Transverse colon (tissue), 4 donors: ENCODE measurements at regions of chr3 and their contacts with region 1.

Region 1: DNA sequence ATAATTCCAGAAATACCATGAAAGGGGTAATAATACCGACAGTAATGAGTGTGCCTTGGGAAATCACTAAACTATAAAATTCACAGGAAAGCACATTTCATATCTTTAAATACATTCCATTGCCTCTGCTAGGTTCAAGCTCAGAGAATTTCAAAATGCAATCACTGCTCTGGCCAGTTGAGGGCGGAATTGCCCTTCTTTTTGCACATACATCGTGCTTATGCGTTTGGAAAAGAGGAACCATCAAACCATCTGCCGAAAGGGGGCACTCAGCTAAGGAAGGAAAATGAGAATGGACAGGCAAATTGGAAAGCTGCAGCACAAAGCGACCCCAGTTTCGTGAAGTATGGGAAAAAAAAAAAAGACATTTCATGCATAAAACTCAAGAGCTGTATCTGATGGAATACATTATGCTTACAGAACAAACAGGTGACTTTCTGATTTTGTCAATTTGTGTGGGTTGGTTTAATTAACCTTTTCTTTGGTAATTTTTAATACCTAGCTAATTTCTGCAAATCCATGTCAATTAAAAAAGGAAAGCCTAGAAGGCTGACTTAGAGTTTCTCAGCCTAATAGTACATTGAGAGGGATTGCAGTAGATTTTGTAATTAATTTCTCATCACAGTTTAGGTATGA is 61.4 kb downstream of the TUSC7 start:
- DNase-seq: peak; percentile 66
- H3K4me3 ChIP-seq: no peak overlapping the region
- H3K27ac ChIP-seq: no peak overlapping the region
- H3K4me1 ChIP-seq: no peaks in the 10 kb centered on the region
- H3K27me3 ChIP-seq: no peaks in the 10 kb centered on the region
- CTCF ChIP-seq: peak; percentile 73 to 86 (median 81)
- EP300 ChIP-seq: no peak
- POLR2A ChIP-seq: no peak

Region 2: DNA sequence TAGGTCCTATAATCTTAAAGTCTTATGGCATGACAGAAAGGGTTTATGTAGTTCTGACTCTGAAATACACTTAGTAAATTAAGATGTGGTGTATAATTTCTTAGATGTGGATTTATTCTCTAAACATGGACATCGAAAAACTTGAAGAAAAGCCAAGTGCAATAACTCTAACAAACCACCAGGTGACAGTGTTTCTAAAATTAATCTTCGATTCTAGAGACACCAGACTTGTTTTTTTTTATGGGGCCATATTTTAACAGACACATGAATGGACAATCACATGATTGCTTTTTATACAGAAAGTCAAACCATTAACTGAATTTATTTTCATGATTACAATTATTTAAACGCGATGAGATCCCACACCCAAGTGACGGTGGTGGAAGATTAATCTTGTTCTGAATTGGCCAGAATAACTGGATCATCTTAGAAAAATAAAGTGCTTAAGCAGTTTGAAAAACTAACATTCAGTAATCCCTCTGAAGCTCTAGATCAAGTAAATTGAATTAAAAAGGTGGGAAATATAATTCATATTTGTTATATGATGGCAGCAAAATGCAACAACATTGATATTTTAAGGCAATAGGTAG is 630.7 kb before region 1 on chr3:
- in situ Hi-C with region 1: loop called in 2 of 4 experiments (anchors 25 kb)
- intact Hi-C with region 1: no loop called
- DNase-seq: no peak
- H3K4me3 ChIP-seq: no peak overlapping the region
- H3K27ac ChIP-seq: peak overlapping the region in 1 of 4 donors; percentile 50
- H3K4me1 ChIP-seq: peaks cover 0 to 6% (median 1%) of the 10 kb centered on the region in 4 donors
- H3K27me3 ChIP-seq: no peaks in the 10 kb centered on the region
- CTCF ChIP-seq: peak; percentile 66 to 92 (median 85)
- EP300 ChIP-seq: no peak
- POLR2A ChIP-seq: no peak

Region 3: GRCh38 chr3:116971531-116971930 is 200.6 kb after region 1 on chr3:
- in situ Hi-C with region 1: no loop called
- intact Hi-C with region 1: no loop called
- DNase-seq: no peak
- H3K4me3 ChIP-seq: no peak overlapping the region
- H3K27ac ChIP-seq: no peak overlapping the region
- H3K4me1 ChIP-seq: no peaks in the 10 kb centered on the region
- H3K27me3 ChIP-seq: no peaks in the 10 kb centered on the region
- CTCF ChIP-seq: no peak
- EP300 ChIP-seq: no peak
- POLR2A ChIP-seq: no peak

Region 4: GRCh38 chr3:117526470-117527079 is 755.6 kb after region 1 on chr3:
- in situ Hi-C with region 1: loop called in 1 of 4 experiments (anchors 25 kb)
- intact Hi-C with region 1: no loop called
- DNase-seq: peak; percentile 30
- H3K4me3 ChIP-seq: no peak overlapping the region
- H3K27ac ChIP-seq: no peak overlapping the region
- H3K4me1 ChIP-seq: no peaks in the 10 kb centered on the region
- H3K27me3 ChIP-seq: no peaks in the 10 kb centered on the region
- CTCF ChIP-seq: peak; percentile 45 to 68 (median 59)
- EP300 ChIP-seq: no peak
- POLR2A ChIP-seq: no peak

Region 5: DNA sequence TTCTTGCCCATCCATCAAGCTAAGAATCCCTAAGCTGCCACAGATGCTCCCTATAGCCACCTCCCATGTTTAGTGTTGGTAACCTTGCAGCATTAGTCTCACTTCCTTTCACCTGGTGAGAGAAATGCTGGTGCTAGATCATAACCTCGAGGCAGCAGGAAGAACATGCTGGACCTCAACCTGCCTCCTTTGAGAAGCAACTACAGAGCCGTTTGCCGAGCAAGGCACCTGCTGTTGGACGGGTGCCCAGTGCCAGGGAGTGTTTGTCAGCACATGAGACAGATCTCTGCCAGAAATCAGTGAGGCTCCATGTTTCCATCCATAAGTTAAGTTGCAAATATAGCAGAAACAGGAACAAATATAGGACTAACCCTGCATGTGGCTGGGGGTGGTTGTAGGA is 894.4 kb after region 1 on chr3:
- in situ Hi-C with region 1: no loop called
- intact Hi-C with region 1: no loop called
- DNase-seq: peak; percentile 17
- H3K4me3 ChIP-seq: no peak overlapping the region
- H3K27ac ChIP-seq: no peak overlapping the region
- H3K4me1 ChIP-seq: no peaks in the 10 kb centered on the region
- H3K27me3 ChIP-seq: no peaks in the 10 kb centered on the region
- CTCF ChIP-seq: no peak
- EP300 ChIP-seq: no peak
- POLR2A ChIP-seq: no peak

Region 6: GRCh38 chr3:118618247-118619040 is 1847.5 kb after region 1 on chr3:
- in situ Hi-C with region 1: loop called in 1 of 4 experiments (anchors 25 kb)
- intact Hi-C with region 1: no loop called
- DNase-seq: no peak
- H3K4me3 ChIP-seq: no peak overlapping the region
- H3K27ac ChIP-seq: no peak overlapping the region
- H3K4me1 ChIP-seq: no peaks in the 10 kb centered on the region
- H3K27me3 ChIP-seq: no peaks in the 10 kb centered on the region
- CTCF ChIP-seq: no peak
- EP300 ChIP-seq: no peak
- POLR2A ChIP-seq: no peak